Naive thymus-derived CD4-positive, alpha-beta T cell (primary cell): ENCODE measurements at regions of chr9 and their contacts with region 1.

Region 1: DNA sequence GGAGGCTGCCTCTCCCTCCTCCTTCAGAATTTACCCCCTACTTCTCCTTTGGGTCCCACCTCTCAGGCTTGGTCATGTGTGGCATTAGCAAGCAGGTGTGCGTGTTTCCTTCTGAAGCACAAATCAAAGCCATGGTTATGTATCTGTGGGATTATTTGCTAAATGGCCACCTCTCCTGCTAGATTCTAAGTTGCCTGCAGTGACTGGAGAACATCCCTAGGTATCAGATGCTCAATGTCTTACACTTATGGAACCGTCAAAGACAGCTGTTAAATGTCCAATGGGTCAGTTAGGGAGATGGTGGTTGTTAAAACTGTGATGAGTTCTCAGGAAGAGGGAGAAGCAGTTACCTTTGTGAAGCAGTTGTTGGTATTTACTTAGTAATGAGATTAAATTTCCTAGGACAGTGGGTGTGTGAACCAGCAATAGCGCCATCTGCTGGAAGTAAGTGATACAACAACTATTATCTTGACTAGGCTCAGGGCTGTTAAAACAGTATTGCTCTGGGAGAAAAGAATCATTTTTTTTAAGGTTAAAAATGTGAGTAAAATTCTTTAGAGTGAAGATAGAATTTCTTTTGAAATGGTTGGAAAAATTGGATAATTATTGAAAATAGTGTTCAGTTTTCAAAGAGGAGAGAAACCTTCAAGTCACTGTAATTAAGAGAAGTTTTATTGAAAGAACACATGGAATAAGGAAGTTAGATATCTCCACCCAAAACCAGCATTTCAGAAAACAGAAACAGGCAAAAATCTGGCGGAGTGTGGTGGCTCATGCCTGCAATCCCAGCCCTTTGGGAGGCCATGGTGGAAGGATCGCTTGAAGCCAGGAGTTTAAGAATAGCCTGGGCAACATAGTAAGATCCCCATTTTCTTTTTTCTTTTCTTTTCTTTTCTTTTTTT is 71.3 kb downstream of the TMC1 start:
- DNase-seq: peak in 7 of 9 donors; percentile 11 to 60 (median 47)
- ATAC-seq: peak; percentile 80
- H3K4me3 ChIP-seq: no peak overlapping the region
- H3K4me3 Mint-ChIP-seq: no peak overlapping the region
- H3K27ac ChIP-seq: no peak overlapping the region
- H3K27ac Mint-ChIP-seq: no peak overlapping the region
- H3K4me1 ChIP-seq: no peaks in the 10 kb centered on the region
- H3K4me1 Mint-ChIP-seq: peaks cover 0 to 50% (median 6%) of the 10 kb centered on the region in 7 donors
- H3K27me3 ChIP-seq: no peaks in the 10 kb centered on the region
- H3K27me3 Mint-ChIP-seq: peaks cover 0 to 5% (median 2%) of the 10 kb centered on the region in 5 donors

Region 2: GRCh38 chr9:72038890-72039410 is 553.8 kb before region 1 on chr9:
- CTCF ChIA-PET with region 1: no interaction called
- POLR2A ChIA-PET with region 1: no interaction called
- intact Hi-C with region 1: loop called in 1 of 2 experiments (anchors 1 kb)
- DNase-seq: peak; percentile 15 to 59 (median 41)
- ATAC-seq: peak; percentile 76
- H3K4me3 ChIP-seq: no peak overlapping the region
- H3K4me3 Mint-ChIP-seq: peak overlapping the region in 1 of 10 donors; percentile 66
- H3K27ac ChIP-seq: no peak overlapping the region
- H3K27ac Mint-ChIP-seq: no peak overlapping the region
- H3K4me1 ChIP-seq: peaks cover 0 to 3% of the 10 kb centered on the region in 2 donors
- H3K4me1 Mint-ChIP-seq: peaks cover 0 to 7% (median 4%) of the 10 kb centered on the region in 7 donors
- H3K27me3 ChIP-seq: no peaks in the 10 kb centered on the region
- H3K27me3 Mint-ChIP-seq: peaks cover 4 to 22% (median 6%) of the 10 kb centered on the region in 5 donors

Region 3: DNA sequence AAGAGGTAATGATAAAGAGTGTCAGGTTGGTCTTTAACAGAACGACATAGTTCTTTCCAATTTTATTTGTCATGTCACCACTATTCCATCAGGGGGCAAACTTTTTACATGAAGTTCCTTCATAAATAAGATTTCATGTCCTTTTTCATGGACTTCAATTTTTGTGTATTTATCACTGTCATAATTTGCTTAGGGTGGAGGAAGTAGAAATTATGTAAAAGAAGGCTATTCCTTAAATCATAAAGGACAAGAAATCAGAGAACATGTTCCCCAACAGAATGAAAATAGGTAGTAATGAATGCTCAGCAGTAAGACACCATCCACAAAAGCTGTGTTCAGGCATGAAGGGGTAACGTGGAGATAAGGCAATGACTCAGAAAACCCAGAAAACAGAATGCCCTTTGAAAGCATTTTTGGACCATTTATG is 300.5 kb before region 1 on chr9:
- CTCF ChIA-PET with region 1: interaction called, 11 read pairs
- POLR2A ChIA-PET with region 1: no interaction called
- intact Hi-C with region 1: loop called (anchors 1 kb)
- DNase-seq: peak in 5 of 9 donors; percentile 12 to 35 (median 27)
- ATAC-seq: peak; percentile 60
- H3K4me3 ChIP-seq: no peak overlapping the region
- H3K4me3 Mint-ChIP-seq: no peak overlapping the region
- H3K27ac ChIP-seq: no peak overlapping the region
- H3K27ac Mint-ChIP-seq: no peak overlapping the region
- H3K4me1 ChIP-seq: no peaks in the 10 kb centered on the region
- H3K4me1 Mint-ChIP-seq: peaks cover 0 to 7% (median 0%) of the 10 kb centered on the region in 7 donors
- H3K27me3 ChIP-seq: no peaks in the 10 kb centered on the region
- H3K27me3 Mint-ChIP-seq: peaks cover 0 to 21% (median 6%) of the 10 kb centered on the region in 5 donors

Region 4: DNA sequence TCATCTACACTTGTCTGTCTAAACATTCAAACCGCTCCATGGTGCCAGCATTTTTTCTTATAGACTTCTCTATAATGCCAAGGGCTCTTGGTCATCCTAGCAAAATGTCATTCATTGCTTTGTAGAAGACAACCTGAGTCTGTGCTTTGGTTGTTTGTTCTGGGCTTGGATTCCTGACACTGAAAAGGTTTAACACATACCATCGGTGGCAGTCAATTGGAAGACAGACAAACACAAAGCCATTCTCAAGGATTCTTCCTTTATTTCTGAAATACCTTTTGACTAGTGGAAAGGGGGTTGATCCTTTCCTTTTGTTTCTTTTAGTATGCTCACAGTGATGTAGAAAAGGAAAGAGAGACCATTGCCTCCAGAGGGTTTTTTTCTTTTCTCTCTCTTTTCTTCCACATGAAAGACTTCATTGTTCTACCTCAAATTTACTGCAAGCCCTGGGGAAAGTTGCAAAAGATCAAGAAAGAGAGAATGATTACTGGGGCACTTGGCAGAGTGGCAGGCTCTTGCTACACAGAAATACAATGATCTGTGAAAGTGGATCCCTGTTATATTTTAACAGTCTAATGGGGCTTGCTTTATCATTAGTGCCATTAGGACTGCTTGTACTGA is 137.8 kb before region 1 on chr9:
- CTCF ChIA-PET with region 1: no interaction called
- POLR2A ChIA-PET with region 1: no interaction called
- intact Hi-C with region 1: loop called in 1 of 2 experiments (anchors 1 kb)
- DNase-seq: no peak
- ATAC-seq: no peak
- H3K4me3 ChIP-seq: no peak overlapping the region
- H3K4me3 Mint-ChIP-seq: no peak overlapping the region
- H3K27ac ChIP-seq: no peak overlapping the region
- H3K27ac Mint-ChIP-seq: peak overlapping the region in 4 of 9 donors; percentile 2 to 32 (median 18)
- H3K4me1 ChIP-seq: peaks cover 0 to 7% of the 10 kb centered on the region in 2 donors
- H3K4me1 Mint-ChIP-seq: peaks cover 0 to 15% (median 4%) of the 10 kb centered on the region in 7 donors
- H3K27me3 ChIP-seq: no peaks in the 10 kb centered on the region
- H3K27me3 Mint-ChIP-seq: peaks cover 0 to 4% (median 0%) of the 10 kb centered on the region in 5 donors

Region 5: DNA sequence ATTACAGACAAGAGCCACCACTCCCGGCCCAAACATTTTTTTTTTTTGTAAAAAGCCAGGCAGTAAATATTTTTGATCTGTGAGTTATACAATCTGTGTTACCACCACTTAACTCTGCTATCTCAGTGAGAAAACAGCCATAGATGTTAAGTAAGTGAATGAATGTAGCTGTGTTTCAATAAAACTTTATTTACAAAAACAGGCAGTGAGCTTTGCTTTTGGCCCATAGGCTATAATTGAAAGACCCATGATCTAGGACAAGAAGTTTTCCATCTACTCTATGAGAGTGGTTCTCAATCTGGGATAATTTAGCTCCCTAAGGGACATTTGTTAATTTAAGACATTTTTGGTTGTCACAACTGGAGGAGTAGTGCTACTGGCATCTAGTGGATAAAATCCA is 19.7 kb after region 1 on chr9:
- CTCF ChIA-PET with region 1: no interaction called
- POLR2A ChIA-PET with region 1: no interaction called
- intact Hi-C with region 1: no loop called
- DNase-seq: no peak
- ATAC-seq: no peak
- H3K4me3 ChIP-seq: no peak overlapping the region
- H3K4me3 Mint-ChIP-seq: no peak overlapping the region
- H3K27ac ChIP-seq: no peak overlapping the region
- H3K27ac Mint-ChIP-seq: no peak overlapping the region
- H3K4me1 ChIP-seq: no peaks in the 10 kb centered on the region
- H3K4me1 Mint-ChIP-seq: no peaks in the 10 kb centered on the region
- H3K27me3 ChIP-seq: no peaks in the 10 kb centered on the region
- H3K27me3 Mint-ChIP-seq: peaks cover 0 to 7% (median 4%) of the 10 kb centered on the region in 5 donors

Region 6: GRCh38 chr9:72827950-72828731 is 235.4 kb after region 1 on chr9:
- CTCF ChIA-PET with region 1: no interaction called
- POLR2A ChIA-PET with region 1: no interaction called
- intact Hi-C with region 1: loop called in 1 of 2 experiments (anchors 10 kb)
- DNase-seq: no peak
- ATAC-seq: no peak
- H3K4me3 ChIP-seq: no peak overlapping the region
- H3K4me3 Mint-ChIP-seq: no peak overlapping the region
- H3K27ac ChIP-seq: no peak overlapping the region
- H3K27ac Mint-ChIP-seq: no peak overlapping the region
- H3K4me1 ChIP-seq: no peaks in the 10 kb centered on the region
- H3K4me1 Mint-ChIP-seq: no peaks in the 10 kb centered on the region
- H3K27me3 ChIP-seq: no peaks in the 10 kb centered on the region
- H3K27me3 Mint-ChIP-seq: peaks cover 4 to 17% (median 6%) of the 10 kb centered on the region in 5 donors

Region 7: GRCh38 chr9:73081979-73082657 is 489.4 kb after region 1 on chr9:
- CTCF ChIA-PET with region 1: no interaction called
- POLR2A ChIA-PET with region 1: no interaction called
- intact Hi-C with region 1: loop called in 1 of 2 experiments (anchors 1 kb)
- DNase-seq: peak in 4 of 9 donors; percentile 8 to 20 (median 15)
- ATAC-seq: peak; percentile 57
- H3K4me3 ChIP-seq: no peak overlapping the region
- H3K4me3 Mint-ChIP-seq: no peak overlapping the region
- H3K27ac ChIP-seq: no peak overlapping the region
- H3K27ac Mint-ChIP-seq: no peak overlapping the region
- H3K4me1 ChIP-seq: no peaks in the 10 kb centered on the region
- H3K4me1 Mint-ChIP-seq: no peaks in the 10 kb centered on the region
- H3K27me3 ChIP-seq: no peaks in the 10 kb centered on the region
- H3K27me3 Mint-ChIP-seq: peaks cover 8 to 31% (median 18%) of the 10 kb centered on the region in 5 donors